OCI-LY7 (cell line): ENCODE measurements at regions of chr13 and their contacts with region 1.

Region 1: GRCh38 chr13:111153279-111153976 is 38.3 kb downstream of the ARHGEF7 start:
- DNase-seq: peak; percentile 81
- H3K4me3 ChIP-seq: peak overlapping the region; percentile 83
- H3K27ac ChIP-seq: peak overlapping the region; percentile 69
- H3K4me1 ChIP-seq: peaks cover 17% of the 10 kb centered on the region
- CTCF ChIP-seq: no peak

Region 2: DNA sequence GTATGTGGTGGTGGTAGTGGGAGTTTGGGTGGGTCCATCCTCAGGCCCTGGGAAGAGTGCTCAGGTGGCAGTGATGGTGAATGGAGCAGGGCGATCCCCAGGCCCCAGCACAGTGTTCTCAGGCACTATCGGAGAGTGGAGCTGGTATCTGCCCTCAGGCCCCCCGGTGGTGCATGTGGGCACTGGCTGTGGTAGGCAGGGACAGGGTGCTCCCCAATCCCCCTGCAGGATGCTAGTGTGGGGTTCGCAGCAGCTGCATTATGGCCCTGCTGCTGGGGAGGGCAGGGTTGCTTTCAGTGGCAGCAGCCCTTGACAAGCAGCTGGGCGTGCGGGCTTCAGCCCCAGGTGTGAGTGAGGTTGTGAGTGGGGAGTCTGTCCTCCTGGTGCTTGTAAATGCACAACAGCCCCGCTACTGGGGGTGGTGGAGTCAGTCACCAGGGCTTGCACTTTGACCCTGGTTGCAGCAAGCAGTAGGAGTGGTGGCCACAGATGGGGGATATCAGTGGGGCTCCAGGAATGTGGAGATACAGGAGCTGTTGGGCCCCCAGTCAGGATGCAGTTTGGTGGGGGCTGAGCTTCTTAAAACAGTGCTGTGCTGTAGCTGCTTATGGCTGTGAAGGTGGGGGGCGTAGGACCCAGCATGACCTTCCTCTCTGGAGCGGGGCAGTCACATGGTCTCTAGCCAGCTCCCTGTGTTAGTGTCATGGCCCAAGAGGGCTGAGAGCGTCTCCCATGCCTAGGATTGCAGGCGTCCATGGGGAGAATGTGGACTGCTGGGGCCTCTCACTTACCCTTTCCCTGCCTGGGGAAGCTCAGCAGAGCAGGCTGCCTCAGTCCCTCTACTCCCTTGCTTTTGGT is 77.0 kb before region 1 on chr13:
- CTCF ChIA-PET with region 1: no interaction called
- POLR2A ChIA-PET with region 1: no interaction called
- intact Hi-C with region 1: loop called (anchors 10 kb)
- DNase-seq: no peak
- H3K4me3 ChIP-seq: no peak overlapping the region
- H3K27ac ChIP-seq: no peak overlapping the region
- H3K4me1 ChIP-seq: no peaks in the 10 kb centered on the region
- CTCF ChIP-seq: no peak